Transverse colon (tissue), 4 donors: ENCODE measurements at regions of chr3 and their contacts with region 1.

Region 1: DNA sequence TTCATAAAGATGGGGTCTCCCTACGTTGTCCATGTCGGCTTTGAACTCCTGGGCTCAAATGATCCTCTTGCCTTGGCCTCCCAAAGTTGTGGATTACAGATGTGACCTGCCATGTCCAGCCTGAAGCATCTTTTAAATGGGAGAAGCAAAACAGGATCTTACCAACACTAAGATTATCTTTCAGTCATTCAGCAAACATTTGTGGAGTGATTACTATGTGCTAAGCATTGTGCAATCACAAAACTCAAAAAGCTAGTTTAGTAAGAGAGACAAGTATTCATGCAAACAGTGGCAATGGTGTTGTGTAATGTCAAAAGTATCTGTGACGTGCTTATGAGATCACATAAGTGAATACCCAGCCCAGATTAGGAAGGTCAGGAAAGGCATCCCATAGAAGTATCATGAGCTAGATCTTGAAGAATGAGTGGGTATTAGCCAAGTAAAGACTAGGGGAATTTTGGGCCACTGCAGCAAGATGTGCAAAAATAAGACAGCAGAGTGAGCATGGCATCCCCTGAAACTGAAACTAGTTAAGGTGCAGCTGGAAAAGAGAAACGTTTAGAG is 32.0 kb downstream of the SEC62 start:
- DNase-seq: no peak
- H3K4me3 ChIP-seq: no peak overlapping the region
- H3K27ac ChIP-seq: no peak overlapping the region
- H3K4me1 ChIP-seq: no peaks in the 10 kb centered on the region
- H3K27me3 ChIP-seq: no peaks in the 10 kb centered on the region
- CTCF ChIP-seq: no peak
- EP300 ChIP-seq: no peak
- POLR2A ChIP-seq: no peak

Region 2: DNA sequence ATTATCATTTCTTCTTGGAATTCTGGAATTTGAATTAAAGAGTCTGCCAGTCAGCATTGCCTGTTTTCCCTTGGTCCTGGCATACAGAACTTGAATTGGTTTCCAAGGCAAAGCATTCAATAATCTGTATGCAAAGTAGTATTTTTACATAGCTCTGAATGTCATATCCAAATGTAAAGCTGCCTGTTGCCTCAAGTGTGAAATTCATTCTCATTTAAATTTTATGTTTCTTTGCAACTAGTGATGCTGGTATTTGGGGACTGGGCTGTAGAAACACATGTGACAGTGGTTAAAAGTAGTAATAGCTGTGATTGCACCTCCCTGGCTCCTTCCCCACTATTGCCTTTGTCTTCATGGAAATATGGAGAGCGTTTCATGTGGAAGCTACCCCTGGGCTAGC is 1159.0 kb before region 1 on chr3:
- in situ Hi-C with region 1: no loop called
- intact Hi-C with region 1: loop called (anchors 10 kb)
- DNase-seq: no peak
- H3K4me3 ChIP-seq: no peak overlapping the region
- H3K27ac ChIP-seq: no peak overlapping the region
- H3K4me1 ChIP-seq: no peaks in the 10 kb centered on the region
- H3K27me3 ChIP-seq: peaks cover 3% of the 10 kb centered on the region
- CTCF ChIP-seq: no peak
- EP300 ChIP-seq: no peak
- POLR2A ChIP-seq: no peak